ENCODE measurements at regions of chr2 and their contacts with region 1.

Region 1: DNA sequence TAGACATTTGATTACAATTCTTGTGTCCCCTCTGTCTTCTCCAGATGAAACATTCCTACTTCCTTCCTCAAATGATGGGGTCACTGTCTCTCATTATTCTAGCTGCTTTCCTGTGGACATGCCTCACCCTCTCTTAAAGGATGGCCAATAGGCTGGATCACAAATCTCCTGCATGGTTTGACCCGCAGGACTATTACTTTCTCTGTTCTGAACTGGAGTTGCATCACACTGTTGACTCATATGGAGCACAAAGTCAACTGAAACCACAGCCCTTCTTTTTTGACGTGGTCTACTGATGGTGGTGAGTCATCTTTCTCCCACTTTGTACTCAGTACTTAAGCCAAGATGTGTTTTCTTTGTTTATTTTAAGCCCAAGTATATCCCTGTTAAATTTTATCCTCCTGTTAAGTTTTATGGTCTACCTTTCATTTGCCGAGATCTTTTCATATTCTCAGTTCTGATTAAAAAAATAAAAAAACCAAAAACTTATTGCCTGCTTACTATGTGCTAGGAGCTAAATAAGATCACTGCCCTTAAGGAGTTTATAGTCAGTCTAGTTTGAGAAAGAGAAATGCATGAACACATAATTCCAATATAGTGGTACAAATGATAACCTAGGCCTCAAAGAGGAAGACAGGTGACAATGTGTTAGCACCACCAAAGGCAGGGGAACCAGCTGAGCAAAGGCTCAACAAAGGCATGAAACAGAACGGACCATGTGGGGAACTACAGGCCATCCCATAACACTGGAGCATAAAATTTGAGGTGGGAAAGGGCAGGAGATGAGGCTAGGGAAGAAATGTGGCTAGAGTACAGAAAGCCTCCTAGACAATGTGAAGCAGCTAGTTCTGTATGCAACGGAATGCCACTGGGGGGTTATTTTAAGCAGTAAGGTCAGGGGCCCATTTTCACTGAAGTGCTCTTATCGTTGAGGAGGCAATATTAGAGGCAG is 67.6 kb upstream of the ZFP36L2 start:
- DNase-seq: peak; percentile 77
- H3K4me3 Mint-ChIP-seq: no peak overlapping the region
- H3K27ac Mint-ChIP-seq: peak overlapping the region; percentile 81
- H3K4me1 Mint-ChIP-seq: peaks cover 29% of the 10 kb centered on the region
- H3K27me3 Mint-ChIP-seq: no peaks in the 10 kb centered on the region

Region 2: DNA sequence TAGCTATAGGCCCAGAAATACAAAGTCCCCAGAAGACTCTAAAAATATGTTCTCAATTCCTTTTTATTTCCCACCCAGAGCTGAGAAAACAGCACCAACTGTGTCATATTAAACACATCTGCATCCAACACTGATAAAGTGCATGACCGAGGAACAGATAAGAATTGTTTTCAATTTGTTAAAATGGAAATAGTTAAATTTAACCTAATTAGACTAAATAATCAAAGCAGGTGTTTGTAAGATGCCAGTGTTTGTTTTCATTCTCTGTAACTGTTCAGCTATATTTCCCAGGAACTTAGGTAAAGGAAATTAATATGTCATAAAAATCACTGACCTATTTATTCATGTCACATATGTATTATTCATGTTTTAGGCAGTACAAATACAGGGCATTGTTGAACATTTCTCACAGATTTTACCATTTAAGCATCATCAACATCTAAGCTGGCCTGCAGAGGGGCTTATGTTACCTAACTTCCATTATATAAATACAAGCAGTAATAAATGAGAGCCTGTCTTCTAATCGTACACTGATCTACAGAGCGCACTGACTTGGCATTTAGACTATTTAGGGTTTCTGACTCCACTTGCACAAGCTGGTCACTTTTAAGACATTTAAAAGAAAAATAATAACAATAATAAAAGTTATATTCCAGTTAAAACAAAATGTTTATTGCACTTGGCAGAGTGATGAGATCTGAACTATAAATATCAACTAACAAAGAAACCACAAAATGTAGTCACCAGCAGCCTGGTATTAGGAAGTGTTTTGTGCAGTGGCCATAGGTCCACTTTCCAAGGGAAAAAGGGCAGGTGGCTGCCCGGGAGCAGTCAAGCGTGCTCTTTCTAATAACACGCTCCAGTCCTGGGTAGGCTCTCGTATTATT is 19.0 kb after region 1 on chr2:
- CTCF ChIA-PET with region 1: no interaction called
- intact Hi-C with region 1: no loop called
- DNase-seq: no peak
- H3K4me3 Mint-ChIP-seq: no peak overlapping the region
- H3K27ac Mint-ChIP-seq: no peak overlapping the region
- H3K4me1 Mint-ChIP-seq: peaks cover 21% of the 10 kb centered on the region
- H3K27me3 Mint-ChIP-seq: no peaks in the 10 kb centered on the region

Region 3: GRCh38 chr2:43387092-43388062 is 93.4 kb after region 1 on chr2:
- CTCF ChIA-PET with region 1: interaction called, 3 read pairs
- intact Hi-C with region 1: loop called (anchors 2 kb)
- DNase-seq: no peak
- H3K4me3 Mint-ChIP-seq: no peak overlapping the region
- H3K27ac Mint-ChIP-seq: no peak overlapping the region
- H3K4me1 Mint-ChIP-seq: peaks cover 19% of the 10 kb centered on the region
- H3K27me3 Mint-ChIP-seq: no peaks in the 10 kb centered on the region

Region 4: DNA sequence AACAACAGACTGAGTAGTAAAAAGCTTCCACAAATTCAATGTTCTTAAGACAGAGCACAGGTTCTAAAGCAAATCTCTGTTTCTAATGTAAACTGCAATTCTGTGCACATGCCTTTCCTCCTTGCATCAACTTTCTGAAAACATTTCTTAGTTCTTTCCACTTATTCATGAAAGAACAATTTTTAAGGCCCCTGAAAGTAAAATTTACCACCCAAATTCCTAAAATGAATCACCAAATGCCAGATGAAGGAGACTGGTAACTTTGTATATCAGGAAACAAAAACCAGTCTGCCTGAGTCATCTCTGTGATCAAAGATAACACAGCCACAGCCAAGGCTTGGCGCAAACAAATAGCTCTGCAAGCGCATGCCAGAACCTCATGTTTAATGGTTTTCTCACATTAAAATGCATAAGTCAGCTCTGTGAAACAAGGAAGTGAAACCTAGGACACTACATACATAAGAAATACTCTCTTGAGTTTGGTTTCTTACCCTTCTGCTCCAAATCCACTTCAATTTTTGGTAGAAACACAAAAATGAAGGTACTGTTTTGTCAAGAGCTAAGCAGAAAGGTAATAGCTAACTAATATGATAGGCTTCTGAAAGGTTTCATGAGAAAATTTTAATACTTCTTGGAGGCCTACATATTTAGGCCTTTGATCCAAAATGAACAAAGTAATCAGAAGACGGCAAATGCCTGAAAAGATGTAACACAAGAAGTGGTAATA is 132.4 kb after region 1 on chr2:
- CTCF ChIA-PET with region 1: no interaction called
- intact Hi-C with region 1: loop called (anchors 1 kb)
- DNase-seq: peak; percentile 80
- H3K4me3 Mint-ChIP-seq: no peak overlapping the region
- H3K27ac Mint-ChIP-seq: peak overlapping the region; percentile 14
- H3K4me1 Mint-ChIP-seq: peaks cover 31% of the 10 kb centered on the region
- H3K27me3 Mint-ChIP-seq: no peaks in the 10 kb centered on the region

Region 5: GRCh38 chr2:43773876-43774613 is 480.0 kb after region 1 on chr2 and contains the start of gene DYNC2LI1:
- CTCF ChIA-PET with region 1: no interaction called
- intact Hi-C with region 1: loop called (anchors 10 kb)
- DNase-seq: peak; percentile 90
- H3K4me3 Mint-ChIP-seq: peak within 1 kb of the TSS; percentile 91
- H3K27ac Mint-ChIP-seq: peak within 1 kb of the TSS; percentile 79
- H3K4me1 Mint-ChIP-seq: peaks cover 21% of the 10 kb centered on the region
- H3K27me3 Mint-ChIP-seq: no peaks in the 10 kb centered on the region
- total RNA-seq, gene DYNC2LI1: 8.0 to 8.9 TPM

Measured in activated naive CD4-positive, alpha-beta T cell treated with anti-CD3 and anti-CD28 coated beads for 36 hours (primary cell).